Mammary epithelial cell (primary cell): ENCODE measurements at regions of chr6 and their contacts with region 1.

Region 1: GRCh38 chr6:41027799-41028628 is 11.0 kb downstream of the UNC5CL start:
- DNase-seq: peak; percentile 63
- H3K4me3 ChIP-seq: peak overlapping the region; percentile 30 to 46 (median 45)
- H3K27ac ChIP-seq: peak overlapping the region; percentile 3
- H3K4me1 ChIP-seq: peaks cover 32% of the 10 kb centered on the region
- H3K27me3 ChIP-seq: no peaks in the 10 kb centered on the region
- CTCF ChIP-seq: peak; percentile 89 to 99

Region 2: DNA sequence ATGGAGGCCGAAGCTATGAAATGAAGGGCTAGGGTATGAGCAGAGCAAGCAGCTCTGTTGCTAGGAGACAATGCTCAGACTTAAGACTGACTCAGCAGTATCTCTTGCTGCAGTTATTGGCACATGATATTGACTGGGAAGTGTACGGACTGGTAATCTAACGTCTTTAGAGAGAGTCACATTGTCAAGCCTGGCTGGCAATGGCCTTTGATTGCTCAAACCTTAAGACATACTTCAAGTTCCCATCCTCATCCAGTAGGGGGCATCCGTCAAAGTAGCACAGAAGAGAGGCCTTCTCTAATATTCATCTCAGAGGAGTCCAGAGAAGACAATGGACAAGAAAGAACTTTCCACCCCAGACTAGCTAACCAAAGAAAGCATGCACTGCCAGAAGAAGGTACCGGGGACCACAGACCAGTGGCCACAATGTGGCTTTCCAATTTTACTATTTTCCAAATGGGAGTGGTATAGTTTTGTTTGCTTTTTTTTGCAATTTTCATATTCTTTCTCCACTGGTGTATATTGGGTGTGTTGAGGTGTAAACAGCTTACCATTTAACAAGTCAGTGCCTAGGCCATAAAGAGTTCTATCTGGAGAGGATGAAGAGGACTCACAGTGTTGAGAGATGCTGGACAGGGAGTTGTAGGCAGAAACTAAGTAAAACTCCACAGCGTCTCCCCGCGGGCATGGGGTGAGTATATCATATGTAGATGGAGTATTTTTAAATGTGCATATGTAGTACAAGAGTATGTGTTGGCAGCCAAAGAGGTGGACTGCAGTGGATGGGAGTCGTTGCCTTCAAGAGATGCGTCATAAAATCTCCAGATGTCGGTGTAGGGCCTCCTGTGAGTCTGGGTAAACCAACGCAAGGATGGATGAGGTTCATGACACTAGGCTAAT is 477.6 kb before region 1 on chr6:
- CTCF ChIA-PET with region 1: no interaction called
- dilution Hi-C with region 1: no loop called
- in situ Hi-C with region 1: no loop called
- intact Hi-C with region 1: loop called (anchors 10 kb)
- DNase-seq: peak; percentile 19
- H3K4me3 ChIP-seq: no peak overlapping the region
- H3K27ac ChIP-seq: no peak overlapping the region
- H3K4me1 ChIP-seq: no peaks in the 10 kb centered on the region
- H3K27me3 ChIP-seq: no peaks in the 10 kb centered on the region
- CTCF ChIP-seq: peak; percentile 72 to 77

Region 3: GRCh38 chr6:40819182-40819834 is 208.7 kb before region 1 on chr6:
- CTCF ChIA-PET with region 1: no interaction called
- dilution Hi-C with region 1: no loop called
- in situ Hi-C with region 1: no loop called
- intact Hi-C with region 1: loop called (anchors 5 kb)
- DNase-seq: no peak
- H3K4me3 ChIP-seq: no peak overlapping the region
- H3K27ac ChIP-seq: no peak overlapping the region
- H3K4me1 ChIP-seq: no peaks in the 10 kb centered on the region
- H3K27me3 ChIP-seq: no peaks in the 10 kb centered on the region
- CTCF ChIP-seq: no peak

Region 4: DNA sequence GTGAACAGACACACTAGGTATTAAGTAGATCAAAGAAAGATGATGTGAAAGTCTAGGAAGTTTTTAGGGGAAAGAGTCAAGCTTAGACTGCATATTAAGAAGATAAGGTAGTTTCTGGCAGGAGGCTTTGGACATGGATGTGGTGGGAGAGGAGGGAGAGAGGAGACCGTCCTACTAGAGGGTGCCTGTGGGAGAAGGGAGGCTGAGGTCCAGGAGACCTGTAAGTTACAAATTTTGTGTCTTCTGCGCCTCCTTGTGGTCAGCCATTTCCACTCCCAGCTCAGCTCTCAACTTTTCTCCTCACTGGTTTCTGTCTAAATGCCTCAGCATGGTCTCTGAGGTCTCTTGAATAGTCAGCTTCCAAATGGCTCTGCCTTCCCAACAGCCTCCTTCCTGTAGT is 182.5 kb before region 1 on chr6:
- CTCF ChIA-PET with region 1: no interaction called
- dilution Hi-C with region 1: no loop called
- in situ Hi-C with region 1: no loop called
- intact Hi-C with region 1: loop called (anchors 5 kb)
- DNase-seq: peak; percentile 30
- H3K4me3 ChIP-seq: no peak overlapping the region
- H3K27ac ChIP-seq: no peak overlapping the region
- H3K4me1 ChIP-seq: no peaks in the 10 kb centered on the region
- H3K27me3 ChIP-seq: peaks cover 5% of the 10 kb centered on the region
- CTCF ChIP-seq: peak; percentile 62 to 74

Region 5: GRCh38 chr6:40894962-40895799 is 132.8 kb before region 1 on chr6:
- CTCF ChIA-PET with region 1: no interaction called
- dilution Hi-C with region 1: no loop called
- in situ Hi-C with region 1: loop called (anchors 5 to 10 kb)
- intact Hi-C with region 1: loop called (anchors 1 kb)
- DNase-seq: peak; percentile 23
- H3K4me3 ChIP-seq: no peak overlapping the region
- H3K27ac ChIP-seq: no peak overlapping the region
- H3K4me1 ChIP-seq: no peaks in the 10 kb centered on the region
- H3K27me3 ChIP-seq: no peaks in the 10 kb centered on the region
- CTCF ChIP-seq: peak; percentile 32 to 69

Region 6: DNA sequence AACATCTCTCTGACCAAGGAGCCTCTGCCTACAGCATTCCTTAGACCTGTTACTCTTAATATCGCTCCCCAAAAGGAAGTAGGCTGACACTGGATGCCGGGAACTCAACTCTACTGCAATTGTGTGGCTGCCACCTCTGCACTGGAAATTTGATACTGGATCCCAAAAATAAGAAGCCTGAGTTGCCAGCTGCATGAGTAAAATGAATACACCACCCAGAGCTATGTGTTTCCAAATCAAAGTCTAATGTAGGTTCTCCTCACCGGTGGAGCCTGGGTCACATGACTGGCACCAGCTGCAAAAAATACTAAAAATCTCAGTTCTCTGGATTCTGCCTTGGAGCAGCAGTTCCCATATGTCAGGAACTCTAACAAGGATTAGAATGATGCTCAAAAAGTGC is 25.8 kb before region 1 on chr6:
- CTCF ChIA-PET with region 1: no interaction called
- dilution Hi-C with region 1: no loop called
- in situ Hi-C with region 1: no loop called
- intact Hi-C with region 1: loop called (anchors 1 kb)
- DNase-seq: no peak
- H3K4me3 ChIP-seq: no peak overlapping the region
- H3K27ac ChIP-seq: no peak overlapping the region
- H3K4me1 ChIP-seq: peaks cover 6% of the 10 kb centered on the region
- H3K27me3 ChIP-seq: no peaks in the 10 kb centered on the region
- CTCF ChIP-seq: no peak

Region 7: DNA sequence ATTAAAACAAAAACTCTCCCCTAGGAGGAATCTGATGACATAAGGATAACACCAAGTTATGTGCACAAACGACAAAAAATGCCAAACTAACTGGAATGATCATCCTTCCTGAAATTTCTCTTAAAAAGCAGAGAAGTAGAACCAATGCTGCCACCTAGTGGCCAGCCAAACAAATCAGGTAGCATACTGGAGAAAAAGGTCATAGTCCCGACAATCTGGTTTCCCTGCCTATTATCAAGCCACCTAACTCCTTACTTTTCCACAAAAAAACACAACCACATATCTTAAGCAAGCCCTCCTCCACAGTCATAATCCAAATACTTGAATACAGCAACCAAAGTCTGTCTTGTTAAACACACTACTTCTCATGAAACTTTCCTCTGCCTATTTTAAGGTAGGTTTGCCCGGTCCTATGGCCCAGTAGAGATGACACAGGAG is 38.9 kb after region 1 on chr6:
- CTCF ChIA-PET with region 1: interaction called, 19 read pairs
- dilution Hi-C with region 1: no loop called
- in situ Hi-C with region 1: no loop called
- intact Hi-C with region 1: loop called (anchors 2 kb)
- DNase-seq: peak; percentile 43
- H3K4me3 ChIP-seq: no peak overlapping the region
- H3K27ac ChIP-seq: no peak overlapping the region
- H3K4me1 ChIP-seq: peaks cover 11% of the 10 kb centered on the region
- H3K27me3 ChIP-seq: no peaks in the 10 kb centered on the region
- CTCF ChIP-seq: peak; percentile 76 to 82